T-cell (primary cell): ENCODE measurements at regions of chr9 and their contacts with region 1.

Region 1: GRCh38 chr9:18678821-18679590 is 205.1 kb downstream of the ADAMTSL1 start:
- DNase-seq: no peak
- ATAC-seq: no peak
- H3K4me3 ChIP-seq: no peak overlapping the region
- H3K4me3 Mint-ChIP-seq: no peak overlapping the region
- H3K27ac ChIP-seq: no peak overlapping the region
- H3K27ac Mint-ChIP-seq: no peak overlapping the region
- H3K4me1 ChIP-seq: no peaks in the 10 kb centered on the region
- H3K4me1 Mint-ChIP-seq: no peaks in the 10 kb centered on the region
- H3K27me3 ChIP-seq: no peaks in the 10 kb centered on the region
- H3K27me3 Mint-ChIP-seq: no peaks in the 10 kb centered on the region

Region 2: GRCh38 chr9:18666986-18667772 is 11.8 kb before region 1 on chr9:
- CTCF ChIA-PET with region 1: no interaction called
- POLR2A ChIA-PET with region 1: interaction called in 1 of 2 experiments, 15 read pairs
- DNase-seq: no peak
- ATAC-seq: no peak
- H3K4me3 ChIP-seq: no peak overlapping the region
- H3K4me3 Mint-ChIP-seq: no peak overlapping the region
- H3K27ac ChIP-seq: no peak overlapping the region
- H3K27ac Mint-ChIP-seq: no peak overlapping the region
- H3K4me1 ChIP-seq: no peaks in the 10 kb centered on the region
- H3K4me1 Mint-ChIP-seq: no peaks in the 10 kb centered on the region
- H3K27me3 ChIP-seq: no peaks in the 10 kb centered on the region
- H3K27me3 Mint-ChIP-seq: peaks cover 5 to 7% of the 10 kb centered on the region in 2 donors